Right cardiac atrium (tissue), 5 donors: ENCODE measurements at regions of chr11 and their contacts with region 1.

Region 1: DNA sequence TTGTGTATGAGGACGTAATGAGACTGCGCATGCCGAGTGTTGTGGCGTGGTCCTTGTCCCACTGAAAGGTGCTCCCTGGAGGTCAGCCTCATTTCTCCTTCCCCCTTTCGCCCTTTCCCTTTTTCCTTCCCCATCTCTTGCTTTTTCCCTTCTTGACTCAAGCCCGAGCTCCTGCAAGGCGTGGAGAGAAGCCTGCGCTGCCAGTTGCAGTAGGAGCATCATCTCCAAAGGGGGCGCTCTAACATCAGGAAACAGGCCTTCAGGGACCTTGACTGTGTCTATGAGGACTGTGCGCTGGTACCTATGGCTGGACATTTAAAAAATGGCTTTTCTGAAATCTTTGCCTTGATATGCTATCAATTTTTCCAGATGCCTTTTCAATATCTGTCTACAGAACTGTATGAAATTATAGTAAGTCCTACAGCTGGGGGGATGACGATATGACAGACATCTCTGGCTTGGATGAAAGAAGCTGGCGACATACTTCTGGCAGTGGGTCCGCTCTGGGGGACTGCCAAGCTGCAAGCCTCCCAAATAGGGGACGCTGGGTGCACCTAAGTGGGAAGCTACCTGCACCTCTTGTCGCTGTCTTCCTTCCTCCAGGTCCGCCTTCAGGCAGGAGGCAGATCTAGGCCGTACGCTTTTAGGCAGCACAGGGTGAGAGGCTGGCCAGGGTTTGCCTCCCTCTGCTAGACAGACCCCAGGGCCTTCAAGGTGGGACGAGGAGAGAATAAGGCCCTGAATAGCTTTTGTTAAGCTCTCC is 96.5 kb downstream of the NXPE2 start:
- DNase-seq: peak in 2 of 3 donors; percentile 43
- ATAC-seq: peak; percentile 62 to 71
- H3K4me3 ChIP-seq: no peak overlapping the region
- H3K27ac ChIP-seq: no peak overlapping the region
- H3K4me1 ChIP-seq: no peaks in the 10 kb centered on the region
- H3K27me3 ChIP-seq: no peaks in the 10 kb centered on the region

Region 2: DNA sequence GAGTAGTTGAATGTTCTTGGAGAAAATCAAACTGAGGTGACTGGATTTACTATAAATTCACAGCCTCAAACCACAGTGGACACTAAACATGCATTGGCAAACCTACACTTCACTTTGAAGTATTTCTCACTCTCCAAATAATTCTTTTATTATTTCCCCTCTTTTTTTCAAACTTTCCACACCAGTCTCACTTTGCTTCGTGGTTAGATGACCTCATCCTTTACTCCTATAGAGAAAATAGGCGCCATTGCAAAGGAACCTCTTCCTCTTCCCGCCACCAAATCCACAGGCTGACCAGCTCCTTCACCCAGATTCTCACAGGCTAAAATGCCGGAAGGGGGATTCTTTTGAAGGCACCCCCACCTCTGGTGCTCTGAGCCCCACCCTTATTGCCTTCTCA is 766.4 kb before region 1 on chr11:
- intact Hi-C with region 1: no loop called
- DNase-seq: no peak
- ATAC-seq: no peak
- H3K4me3 ChIP-seq: no peak overlapping the region
- H3K27ac ChIP-seq: no peak overlapping the region
- H3K4me1 ChIP-seq: no peaks in the 10 kb centered on the region
- H3K27me3 ChIP-seq: no peaks in the 10 kb centered on the region

Region 3: GRCh38 chr11:114384487-114384886 is 390.3 kb before region 1 on chr11:
- intact Hi-C with region 1: no loop called
- DNase-seq: no peak
- ATAC-seq: no peak
- H3K4me3 ChIP-seq: no peak overlapping the region
- H3K27ac ChIP-seq: no peak overlapping the region
- H3K4me1 ChIP-seq: no peaks in the 10 kb centered on the region
- H3K27me3 ChIP-seq: no peaks in the 10 kb centered on the region

Region 4: DNA sequence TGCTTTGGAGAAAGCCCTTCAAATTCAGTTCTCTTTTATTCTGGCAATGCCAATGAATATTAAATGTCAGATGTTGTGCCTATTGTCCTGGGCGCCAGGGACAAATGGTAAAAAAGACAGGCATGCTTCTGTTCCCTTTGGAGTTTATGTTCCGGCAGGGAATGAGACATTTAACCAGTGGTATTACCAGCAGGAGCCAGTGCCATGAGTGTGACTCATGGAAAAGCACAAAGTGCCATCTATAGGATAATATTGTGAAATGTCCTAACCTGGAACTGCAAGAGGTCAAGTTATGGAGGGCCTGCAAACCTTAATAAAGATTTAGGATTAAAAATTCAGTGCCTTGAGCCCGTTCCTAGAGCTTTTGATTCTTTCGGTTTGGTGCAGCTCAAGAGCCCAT is 296.0 kb before region 1 on chr11:
- intact Hi-C with region 1: no loop called
- DNase-seq: no peak
- ATAC-seq: no peak
- H3K4me3 ChIP-seq: no peak overlapping the region
- H3K27ac ChIP-seq: no peak overlapping the region
- H3K4me1 ChIP-seq: no peaks in the 10 kb centered on the region
- H3K27me3 ChIP-seq: no peaks in the 10 kb centered on the region

Region 5: GRCh38 chr11:114953039-114953438 is 178.3 kb after region 1 on chr11:
- intact Hi-C with region 1: loop called in 1 of 4 experiments (anchors 5 kb)
- DNase-seq: no peak
- ATAC-seq: peak; percentile 53 to 59
- H3K4me3 ChIP-seq: no peak overlapping the region
- H3K27ac ChIP-seq: no peak overlapping the region
- H3K4me1 ChIP-seq: no peaks in the 10 kb centered on the region
- H3K27me3 ChIP-seq: no peaks in the 10 kb centered on the region